ENCODE measurements at regions of chr17 and their contacts with region 1.

Region 1: DNA sequence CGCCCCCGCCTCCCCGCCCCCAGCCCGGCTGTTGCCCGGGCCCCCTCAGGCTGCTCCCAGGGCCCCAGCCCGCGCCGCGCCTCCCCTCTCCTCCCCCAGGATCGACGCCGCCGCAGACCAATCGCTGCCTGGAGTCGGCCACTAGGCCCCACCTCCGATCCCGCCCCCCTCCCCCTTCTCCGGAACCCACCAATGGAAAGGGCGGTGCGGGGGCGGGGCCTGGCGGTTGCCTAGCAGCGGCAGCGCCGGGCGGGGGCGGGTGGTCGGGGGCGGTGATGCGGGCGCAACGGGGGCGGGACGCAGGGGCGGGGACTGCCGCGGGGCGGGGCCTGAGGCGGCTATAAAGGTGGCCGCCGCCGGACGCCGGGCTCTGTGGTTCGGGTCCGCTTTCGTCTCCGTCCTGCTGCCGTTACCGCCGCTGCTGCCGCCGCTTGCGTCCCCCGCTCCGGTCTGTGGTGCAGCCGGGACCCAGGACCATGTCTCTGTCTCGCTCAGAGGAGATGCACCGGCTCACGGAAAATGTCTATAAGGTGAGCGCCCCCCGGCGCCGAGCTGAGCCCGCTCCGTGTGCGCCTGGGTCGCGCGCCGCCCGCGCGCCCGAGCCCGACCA is at the start of gene BAIAP2:
- DNase-seq: peak; percentile 92 to 93
- ATAC-seq: peak; percentile 83 to 85
- H3K4me3 ChIP-seq: peak within 1 kb of the TSS; percentile 50 to 66 (median 54)
- H3K27ac ChIP-seq: peak within 1 kb of the TSS in 2 of 4 donors; percentile 34 to 46
- H3K4me1 ChIP-seq: peaks cover 14 to 34% of the 10 kb centered on the region in 2 donors
- H3K27me3 ChIP-seq: peaks cover 0 to 4% (median 2%) of the 10 kb centered on the region in 3 donors
- CTCF ChIP-seq: peak in 1 of 5 experiments; percentile 11
- POLR2A ChIP-seq: peak; percentile 90 to 92
- total RNA-seq, gene BAIAP2: 7.3 to 36.1 (median 15.4) TPM

Region 2: DNA sequence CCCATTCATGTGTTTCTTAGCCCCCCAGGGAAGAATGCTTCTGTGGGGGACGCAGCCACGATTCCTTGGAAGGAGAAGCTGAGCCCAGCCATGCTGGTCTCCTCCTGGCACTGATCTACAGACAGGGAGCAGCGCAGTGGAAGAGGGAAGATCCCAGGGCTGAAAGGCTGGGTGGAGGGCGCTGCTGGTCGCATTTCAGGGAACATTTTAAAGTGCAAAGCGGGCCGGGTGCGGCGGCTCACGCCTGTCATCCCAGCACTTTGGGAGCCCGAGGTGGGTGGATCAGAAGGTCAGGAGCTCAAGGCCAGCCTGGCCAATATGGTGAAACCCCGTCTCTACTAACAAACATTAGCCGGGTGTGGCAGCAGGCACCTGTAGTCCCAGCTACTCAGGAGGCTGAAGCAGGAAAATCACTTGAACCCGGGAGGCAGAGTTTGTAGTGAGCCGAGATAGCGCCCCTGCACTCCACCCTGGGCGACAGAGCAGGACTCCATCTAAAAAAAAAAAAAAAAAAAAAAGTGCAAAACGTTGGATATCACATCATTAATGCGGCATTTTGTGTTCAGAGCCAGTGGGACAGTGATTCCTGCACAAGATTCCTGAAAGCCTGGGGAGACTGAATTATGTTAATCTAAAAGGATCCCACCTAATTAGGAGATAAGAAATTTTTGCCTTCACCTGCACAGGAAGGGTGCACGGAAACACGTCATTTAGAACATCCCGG is 43.8 kb before region 1 on chr17:
- in situ Hi-C with region 1: no loop called
- intact Hi-C with region 1: loop called (anchors 1 kb)
- DNase-seq: no peak
- ATAC-seq: peak in 1 of 2 donors; percentile 3
- H3K4me3 ChIP-seq: peak overlapping the region; percentile 70 to 83 (median 77)
- H3K27ac ChIP-seq: peak overlapping the region; percentile 68 to 85 (median 73)
- H3K4me1 ChIP-seq: peaks cover 24 to 40% of the 10 kb centered on the region in 2 donors
- H3K27me3 ChIP-seq: no peaks in the 10 kb centered on the region
- CTCF ChIP-seq: no peak
- POLR2A ChIP-seq: no peak

Region 3: GRCh38 chr17:81057079-81057730 is 22.3 kb after region 1 on chr17:
- in situ Hi-C with region 1: no loop called
- intact Hi-C with region 1: loop called (anchors 2 kb)
- DNase-seq: peak; percentile 81 to 84
- ATAC-seq: peak; percentile 95 to 98
- H3K4me3 ChIP-seq: no peak overlapping the region
- H3K27ac ChIP-seq: peak overlapping the region; percentile 61 to 87 (median 77)
- H3K4me1 ChIP-seq: peaks cover 17% of the 10 kb centered on the region in 2 donors
- H3K27me3 ChIP-seq: no peaks in the 10 kb centered on the region
- CTCF ChIP-seq: no peak
- POLR2A ChIP-seq: no peak

Region 4: DNA sequence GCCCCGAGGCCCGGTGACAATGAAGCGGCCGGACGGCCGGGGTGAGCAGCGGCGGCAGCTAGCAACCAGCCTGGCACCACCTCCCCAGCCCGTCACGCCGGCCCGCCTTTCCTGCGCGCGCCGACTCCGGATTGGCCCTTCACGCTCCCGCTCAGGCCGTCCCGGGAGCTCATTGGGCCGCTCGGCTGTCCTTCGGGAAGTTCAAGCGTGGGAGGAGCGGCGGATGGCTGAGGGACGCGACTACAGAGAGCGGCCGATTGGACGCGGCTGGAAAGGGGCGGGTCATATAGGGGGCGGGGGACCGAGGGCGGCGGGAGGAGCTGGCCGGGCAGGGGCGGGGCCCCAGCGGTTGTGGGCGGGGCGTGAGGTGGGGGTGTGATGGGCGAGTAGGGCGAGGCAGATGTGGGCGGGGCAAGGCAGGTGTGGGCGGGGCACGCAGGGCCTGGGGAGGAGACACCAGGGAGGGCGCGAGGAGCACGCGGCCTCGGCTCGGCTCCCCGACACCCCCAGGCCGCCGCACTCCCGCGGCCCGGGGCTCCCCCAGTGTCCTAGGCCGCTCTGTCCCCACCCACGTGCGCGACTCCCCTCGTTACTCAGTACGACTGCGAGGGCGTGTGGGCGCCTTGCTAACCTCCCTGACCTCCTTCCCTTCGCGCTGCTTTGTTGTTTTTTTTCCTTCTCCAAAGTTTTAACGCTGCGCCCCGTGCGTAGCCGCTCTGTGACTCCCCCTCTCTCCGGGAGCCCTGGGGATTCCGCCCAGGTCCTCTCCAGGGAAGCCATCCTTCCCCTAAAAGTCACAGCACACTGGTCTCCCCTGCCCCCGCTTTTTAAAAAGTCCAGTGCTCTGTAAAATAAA is 188.2 kb after region 1 on chr17 and contains the start of gene CEP131:
- in situ Hi-C with region 1: no loop called
- intact Hi-C with region 1: loop called (anchors 10 kb)
- DNase-seq: peak; percentile 98 to 99
- ATAC-seq: peak; percentile 99
- H3K4me3 ChIP-seq: peak within 1 kb of the TSS; percentile 54 to 91 (median 74)
- H3K27ac ChIP-seq: peak within 1 kb of the TSS in 3 of 4 donors; percentile 29 to 47 (median 47)
- H3K4me1 ChIP-seq: peaks cover 11 to 18% of the 10 kb centered on the region in 2 donors
- H3K27me3 ChIP-seq: no peaks in the 10 kb centered on the region
- CTCF ChIP-seq: no peak
- POLR2A ChIP-seq: no peak
- total RNA-seq, gene CEP131: 6.0 to 8.8 (median 7.5) TPM

Measured in gastrocnemius medialis (tissue), 4 donors.